H1 (cell line): ENCODE measurements at regions of chr7 and their contacts with region 1.

Region 1: DNA sequence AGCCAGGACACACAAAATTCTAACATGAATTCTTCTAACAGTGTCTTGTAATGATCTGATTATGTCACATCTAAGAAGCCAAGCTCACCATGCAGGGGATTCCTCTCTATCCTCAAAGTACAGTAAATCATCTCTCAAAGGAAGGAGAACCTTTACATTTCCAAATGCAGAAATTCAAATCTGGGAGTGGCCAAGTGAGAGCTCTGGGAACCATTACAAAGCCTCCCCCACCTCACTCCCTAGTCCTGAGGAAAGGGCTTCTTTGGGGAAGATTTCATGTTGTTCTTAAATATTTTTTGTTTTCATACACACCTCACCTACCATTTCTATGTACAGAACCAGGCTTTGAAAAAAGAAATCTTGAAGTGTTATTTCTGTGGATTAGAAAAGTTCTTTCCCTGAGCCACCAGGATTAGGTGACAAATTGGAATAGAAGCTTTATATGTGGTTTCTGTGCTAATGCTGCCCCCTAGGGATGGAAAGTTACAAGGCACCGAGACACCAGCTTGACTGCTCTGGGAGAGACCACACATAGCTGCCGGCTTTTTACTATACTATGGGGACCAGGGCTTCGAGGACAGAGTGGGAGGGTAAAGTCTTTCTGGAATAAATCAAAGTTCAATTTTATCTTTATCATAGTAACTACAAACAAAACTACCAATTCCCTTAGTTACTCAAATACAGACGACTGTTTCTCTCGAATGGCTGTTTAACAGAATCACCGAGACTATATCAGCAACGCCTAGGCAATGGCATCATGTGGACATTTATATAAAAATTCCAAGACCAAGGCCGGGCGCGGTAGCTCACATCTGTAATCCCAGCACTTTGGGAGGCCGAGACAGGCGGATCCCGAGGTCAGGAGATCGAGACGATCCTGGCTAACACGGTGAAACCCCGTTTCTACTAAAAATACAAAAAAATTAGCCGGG is 116.1 kb downstream of the RNF216 start:
- DNase-seq: peak; percentile 64 to 81
- H3K4me3 ChIP-seq: no peak overlapping the region
- H3K27ac ChIP-seq: no peak overlapping the region
- H3K4me1 ChIP-seq: peaks cover 0 to 9% (median 4%) of the 10 kb centered on the region in 4 experiments; a peak in 6 of 7 replicates
- H3K27me3 ChIP-seq: no peaks in the 10 kb centered on the region
- CTCF ChIP-seq: peak; percentile 61 to 90 (median 84)
- EP300 ChIP-seq: no peak
- POLR2A ChIP-seq: no peak
- RAD21 ChIP-seq: peak; percentile 92 to 93

Region 2: DNA sequence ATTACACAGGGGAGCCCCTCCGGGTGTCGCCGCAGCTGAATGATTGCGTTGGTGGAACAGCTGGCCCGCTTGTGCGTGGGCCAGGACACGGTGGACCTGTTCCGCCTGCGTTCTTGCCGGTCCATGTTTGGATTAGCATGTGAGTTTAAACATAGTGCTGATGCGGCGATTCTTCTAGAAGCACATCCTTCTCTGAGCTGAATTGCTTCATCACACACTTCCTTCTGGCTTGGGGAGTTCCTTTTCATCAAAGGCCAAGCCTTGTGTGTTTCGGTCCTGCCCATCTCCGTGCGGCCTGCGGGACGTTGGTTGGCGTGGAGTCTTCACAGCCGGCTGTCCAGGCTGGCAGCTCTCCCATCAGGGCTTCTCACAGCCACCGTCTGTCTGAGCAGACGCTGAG is 428.1 kb before region 1 on chr7:
- CTCF ChIA-PET with region 1: no interaction called
- POLR2A ChIA-PET with region 1: no interaction called
- DNase-seq: no peak
- H3K4me3 ChIP-seq: no peak overlapping the region
- H3K27ac ChIP-seq: no peak overlapping the region
- H3K4me1 ChIP-seq: peaks cover 0 to 4% (median 1%) of the 10 kb centered on the region in 4 experiments; a peak in 2 of 7 replicates
- H3K27me3 ChIP-seq: peaks cover 0 to 9% (median 0%) of the 10 kb centered on the region in 4 experiments; a peak in 3 of 7 replicates
- CTCF ChIP-seq: no peak
- EP300 ChIP-seq: no peak
- POLR2A ChIP-seq: no peak
- RAD21 ChIP-seq: no peak

Region 3: GRCh38 chr7:5526100-5526905 is 139.1 kb before region 1 on chr7:
- CTCF ChIA-PET with region 1: interaction called, 4 read pairs
- POLR2A ChIA-PET with region 1: interaction called, 25 read pairs
- DNase-seq: peak in 1 of 2 experiments; percentile 76
- H3K4me3 ChIP-seq: peak overlapping the region in 1 of 4 experiments; percentile 90; a peak in 2 of 8 replicates
- H3K27ac ChIP-seq: peak overlapping the region; percentile 24; the same call in 1 of the 2 replicates
- H3K4me1 ChIP-seq: peaks cover 0 to 21% (median 12%) of the 10 kb centered on the region in 4 experiments; a peak in 6 of 7 replicates
- H3K27me3 ChIP-seq: no peaks in the 10 kb centered on the region
- CTCF ChIP-seq: peak in 1 of 3 experiments; percentile 8; a peak in 1 of 4 replicates
- EP300 ChIP-seq: no peak
- POLR2A ChIP-seq: peak in 1 of 2 experiments; percentile 72; a peak in 2 of 3 replicates
- RAD21 ChIP-seq: peak; percentile 17 to 26; a peak in 2 of 4 replicates

Region 4: GRCh38 chr7:5546626-5547025 is 118.7 kb before region 1 on chr7:
- CTCF ChIA-PET with region 1: no interaction called
- POLR2A ChIA-PET with region 1: no interaction called
- DNase-seq: no peak
- H3K4me3 ChIP-seq: no peak overlapping the region
- H3K27ac ChIP-seq: no peak overlapping the region
- H3K4me1 ChIP-seq: no peaks in the 10 kb centered on the region; a peak in 1 of 7 replicates
- H3K27me3 ChIP-seq: no peaks in the 10 kb centered on the region
- CTCF ChIP-seq: no peak
- EP300 ChIP-seq: no peak
- POLR2A ChIP-seq: no peak
- RAD21 ChIP-seq: no peak

Region 5: GRCh38 chr7:5607951-5608656 is 57.3 kb before region 1 on chr7:
- CTCF ChIA-PET with region 1: interaction called, 30 read pairs
- POLR2A ChIA-PET with region 1: no interaction called
- DNase-seq: no peak
- H3K4me3 ChIP-seq: no peak overlapping the region
- H3K27ac ChIP-seq: no peak overlapping the region
- H3K4me1 ChIP-seq: peaks cover 2 to 21% (median 9%) of the 10 kb centered on the region in 4 experiments
- H3K27me3 ChIP-seq: no peaks in the 10 kb centered on the region
- CTCF ChIP-seq: no peak
- EP300 ChIP-seq: no peak
- POLR2A ChIP-seq: peak in 1 of 2 experiments; percentile 27; a peak in 1 of 3 replicates
- RAD21 ChIP-seq: no peak; a peak in 1 of 4 replicates

Region 6: DNA sequence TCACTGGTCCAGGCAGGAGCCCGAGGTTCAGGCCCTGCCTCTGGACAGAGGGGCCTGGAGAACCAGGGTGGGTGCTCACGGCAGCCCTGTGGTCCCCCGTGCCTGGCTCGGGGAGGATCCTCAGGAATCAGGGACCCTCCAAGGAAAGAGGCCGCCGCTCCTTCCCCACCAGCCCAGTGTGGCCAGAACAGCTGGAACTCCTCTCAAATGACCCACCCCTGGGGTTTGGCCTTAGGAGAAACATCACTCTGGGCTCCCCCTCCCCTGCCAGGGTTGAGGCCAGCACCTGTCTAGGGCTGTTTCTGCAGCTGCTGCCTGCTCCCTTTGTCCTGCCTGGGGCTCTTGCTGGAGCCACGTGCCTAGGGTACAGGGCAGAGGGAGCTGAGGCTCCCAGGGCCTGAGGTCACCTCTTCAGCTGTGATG is 44.9 kb before region 1 on chr7:
- CTCF ChIA-PET with region 1: interaction called, 12 read pairs
- POLR2A ChIA-PET with region 1: interaction called, 5 read pairs
- DNase-seq: no peak
- H3K4me3 ChIP-seq: no peak overlapping the region
- H3K27ac ChIP-seq: no peak overlapping the region
- H3K4me1 ChIP-seq: peaks cover 0 to 4% (median under 1%) of the 10 kb centered on the region in 4 experiments; a peak in 2 of 7 replicates
- H3K27me3 ChIP-seq: no peaks in the 10 kb centered on the region
- CTCF ChIP-seq: no peak
- EP300 ChIP-seq: no peak
- POLR2A ChIP-seq: no peak
- RAD21 ChIP-seq: no peak

Region 7: DNA sequence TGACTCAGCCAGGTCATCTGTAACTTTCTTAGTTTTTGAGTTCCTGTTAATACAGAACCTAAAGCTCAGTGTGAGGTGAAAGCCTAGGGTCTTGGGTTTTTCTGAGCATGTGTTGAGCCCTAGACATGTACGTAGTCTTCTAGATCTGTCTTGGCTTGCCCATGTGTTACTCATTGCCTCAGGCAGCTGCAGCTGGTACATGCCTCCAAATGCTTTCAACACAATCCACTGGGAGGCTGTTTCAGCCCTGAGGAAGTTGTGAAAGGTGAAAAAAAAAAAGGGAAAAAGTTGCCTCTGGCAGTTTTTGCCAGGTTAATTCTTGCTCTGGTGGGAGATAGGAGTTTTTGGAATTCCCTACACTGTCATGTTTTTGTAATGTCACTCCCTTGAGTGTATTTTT is 18.5 kb before region 1 on chr7:
- CTCF ChIA-PET with region 1: interaction called, 22 read pairs
- POLR2A ChIA-PET with region 1: interaction called, 3 read pairs
- DNase-seq: no peak
- H3K4me3 ChIP-seq: no peak overlapping the region
- H3K27ac ChIP-seq: no peak overlapping the region
- H3K4me1 ChIP-seq: no peaks in the 10 kb centered on the region
- H3K27me3 ChIP-seq: no peaks in the 10 kb centered on the region
- CTCF ChIP-seq: no peak
- EP300 ChIP-seq: no peak
- POLR2A ChIP-seq: no peak
- RAD21 ChIP-seq: no peak

Region 8: DNA sequence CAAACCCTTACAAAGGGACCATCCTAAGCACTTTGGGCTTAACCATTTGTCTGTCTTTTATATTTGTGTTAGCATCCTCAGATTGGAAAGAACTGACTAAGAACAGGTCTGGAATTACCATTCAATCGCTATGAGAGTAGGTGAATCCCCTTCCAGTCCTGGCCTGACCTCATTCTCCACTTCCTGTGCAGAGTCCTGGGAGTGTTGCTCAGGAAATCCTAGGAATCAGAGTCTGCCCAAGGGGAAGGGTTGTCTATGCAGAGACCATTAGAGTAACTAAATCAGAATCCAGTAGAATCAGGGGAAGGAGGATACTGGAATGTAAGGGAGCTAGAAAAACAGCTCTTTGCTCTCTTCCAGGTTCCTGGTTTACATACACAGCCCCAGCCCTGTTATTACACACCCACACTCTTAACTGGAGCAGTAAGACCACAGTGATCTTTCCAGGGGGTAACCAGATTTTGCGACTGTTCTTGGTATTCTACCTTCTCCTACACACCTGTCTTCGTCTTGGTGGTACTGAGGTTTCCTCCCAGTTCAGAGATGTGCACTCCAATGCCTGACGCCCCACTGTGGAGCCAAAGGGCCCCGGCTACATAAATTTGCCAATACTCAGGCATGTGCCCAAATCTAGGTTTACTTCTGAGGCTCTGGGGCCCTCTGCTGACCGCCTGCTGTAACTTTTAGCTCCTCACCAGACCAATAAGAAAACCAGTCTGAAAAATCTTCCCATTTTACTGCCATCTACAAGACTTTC is 12.4 kb after region 1 on chr7:
- CTCF ChIA-PET with region 1: interaction called, 175 read pairs
- POLR2A ChIA-PET with region 1: interaction called, 5 read pairs
- DNase-seq: peak in 1 of 2 experiments; percentile 78
- H3K4me3 ChIP-seq: no peak overlapping the region
- H3K27ac ChIP-seq: no peak overlapping the region
- H3K4me1 ChIP-seq: peaks cover 2 to 10% (median 6%) of the 10 kb centered on the region in 4 experiments; a peak in 6 of 7 replicates
- H3K27me3 ChIP-seq: no peaks in the 10 kb centered on the region
- CTCF ChIP-seq: peak; percentile 33 to 86 (median 77)
- EP300 ChIP-seq: no peak
- POLR2A ChIP-seq: no peak
- RAD21 ChIP-seq: peak; percentile 90 to 92

Region 9: GRCh38 chr7:5704534-5704922 is 39.2 kb after region 1 on chr7:
- CTCF ChIA-PET with region 1: interaction called, 34 read pairs
- POLR2A ChIA-PET with region 1: no interaction called
- DNase-seq: peak; percentile 44 to 71
- H3K4me3 ChIP-seq: no peak overlapping the region
- H3K27ac ChIP-seq: no peak overlapping the region
- H3K4me1 ChIP-seq: peaks cover 0 to 3% (median under 1%) of the 10 kb centered on the region in 4 experiments; a peak in 1 of 7 replicates
- H3K27me3 ChIP-seq: no peaks in the 10 kb centered on the region
- CTCF ChIP-seq: peak in 2 of 3 experiments; percentile 81 to 91; a peak in 3 of 4 replicates
- EP300 ChIP-seq: no peak
- POLR2A ChIP-seq: no peak
- RAD21 ChIP-seq: peak; percentile 90

Region 10: GRCh38 chr7:5780801-5781496 is 115.6 kb after region 1 on chr7:
- CTCF ChIA-PET with region 1: no interaction called
- POLR2A ChIA-PET with region 1: no interaction called
- DNase-seq: peak in 1 of 2 experiments; percentile 65
- H3K4me3 ChIP-seq: peak overlapping the region; percentile 53 to 85 (median 60)
- H3K27ac ChIP-seq: no peak overlapping the region
- H3K4me1 ChIP-seq: no peaks in the 10 kb centered on the region
- H3K27me3 ChIP-seq: no peaks in the 10 kb centered on the region
- CTCF ChIP-seq: no peak
- EP300 ChIP-seq: no peak
- POLR2A ChIP-seq: no peak
- RAD21 ChIP-seq: no peak

Region 11: GRCh38 chr7:6197801-6198551 is 532.6 kb after region 1 on chr7:
- CTCF ChIA-PET with region 1: no interaction called
- POLR2A ChIA-PET with region 1: no interaction called
- DNase-seq: no peak
- H3K4me3 ChIP-seq: no peak overlapping the region
- H3K27ac ChIP-seq: no peak overlapping the region
- H3K4me1 ChIP-seq: peaks cover 1 to 11% (median 7%) of the 10 kb centered on the region in 4 experiments
- H3K27me3 ChIP-seq: no peaks in the 10 kb centered on the region
- CTCF ChIP-seq: no peak
- EP300 ChIP-seq: no peak
- POLR2A ChIP-seq: no peak
- RAD21 ChIP-seq: no peak